ENCODE measurements at regions of chr2 and their contacts with region 1.

Region 1: DNA sequence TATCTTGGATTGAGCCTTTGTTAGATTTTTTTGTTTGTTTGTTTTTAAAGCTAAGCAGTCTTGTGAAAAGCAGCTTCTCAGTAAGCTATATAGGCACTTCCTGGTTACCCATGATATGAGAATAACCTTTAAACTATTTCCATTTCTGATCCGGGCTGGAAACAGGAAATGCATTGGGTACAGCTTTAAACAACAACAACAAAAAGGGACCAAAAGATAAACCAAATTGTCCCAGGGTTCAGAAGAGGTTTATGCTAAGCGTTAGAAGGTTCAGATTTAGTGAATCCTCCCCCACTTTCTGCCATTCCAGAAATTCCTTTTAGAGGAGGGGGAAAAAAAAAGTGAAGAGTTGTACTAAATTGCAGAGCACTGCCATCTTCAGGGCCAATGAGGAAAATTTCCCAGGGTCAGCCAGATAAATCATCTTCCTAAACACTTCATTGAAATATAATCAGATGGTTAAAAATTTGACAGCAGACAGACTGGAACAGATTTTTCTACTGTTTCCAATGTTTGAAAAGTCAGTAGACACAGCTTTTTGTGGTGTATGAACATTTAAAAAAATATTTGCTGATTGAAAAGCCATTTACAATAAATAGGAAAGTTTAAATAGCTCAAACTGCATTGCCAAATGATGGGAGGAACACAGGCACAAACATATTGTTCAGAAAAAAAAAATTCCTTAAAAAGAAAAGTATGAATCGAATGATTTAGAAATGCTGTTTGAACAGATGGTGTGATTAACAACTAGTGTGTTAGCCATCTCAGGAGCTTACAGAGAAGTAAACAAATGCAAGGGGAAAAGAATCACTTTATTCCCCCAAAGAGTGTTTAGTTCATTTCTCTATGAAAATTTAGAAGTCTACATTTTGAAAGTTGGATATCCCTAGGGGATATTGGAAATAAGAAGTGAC is 189.9 kb upstream of the TANK start:
- DNase-seq: no peak
- ATAC-seq: 0 out of 3 replicates have a peak, but pooled peaks have one; percentile 20
- H3K4me3 ChIP-seq: no peak overlapping the region
- H3K27ac ChIP-seq: no peak overlapping the region
- H3K4me1 ChIP-seq: no peaks in the 10 kb centered on the region
- H3K27me3 ChIP-seq: peaks cover 0 to 2% of the 10 kb centered on the region in 2 experiments; a peak in 2 of 4 replicates
- CTCF ChIP-seq: peak; percentile 36 to 50 (median 37); a peak in 4 of 6 replicates
- EP300 ChIP-seq: no peak
- POLR2A ChIP-seq: no peak
- RAD21 ChIP-seq: peak; percentile 58

Region 2: DNA sequence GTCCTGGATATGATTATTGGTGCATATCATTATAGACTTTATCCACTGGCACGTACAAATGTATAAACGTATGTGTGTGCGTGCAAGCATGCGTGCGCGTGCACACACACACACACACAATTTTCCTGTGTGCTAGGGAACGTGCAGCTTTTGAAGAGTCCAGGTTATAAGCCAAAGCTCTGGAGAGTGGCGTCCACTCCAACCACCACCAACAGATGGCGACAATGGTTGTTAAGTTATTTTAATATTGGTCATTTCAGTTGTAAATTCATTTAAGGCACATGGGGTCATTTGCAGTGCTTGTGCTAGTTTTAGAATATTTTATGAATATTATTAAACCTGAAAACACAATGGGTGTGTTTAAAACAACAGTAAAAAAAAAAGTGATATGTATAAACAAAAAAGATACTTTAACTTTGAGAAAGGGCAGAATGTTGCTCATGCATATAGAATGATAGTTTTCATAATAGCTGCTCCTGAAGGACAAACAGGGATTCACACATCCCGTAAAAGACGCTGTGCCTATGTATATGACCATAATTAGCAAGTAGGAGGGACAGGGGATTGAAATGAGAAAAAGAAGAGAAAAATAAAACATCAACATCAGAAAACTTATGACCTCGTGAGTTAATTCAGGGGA is 646.0 kb before region 1 on chr2:
- CTCF ChIA-PET with region 1: interaction called, 17 read pairs
- POLR2A ChIA-PET with region 1: no interaction called
- RAD21 ChIA-PET with region 1: interaction called, 6 read pairs
- SMC1A ChIA-PET with region 1: interaction called, 11 read pairs
- in situ Hi-C with region 1: no loop called
- intact Hi-C with region 1: no loop called
- DNase-seq: no peak
- ATAC-seq: peak; percentile 82
- H3K4me3 ChIP-seq: no peak overlapping the region
- H3K27ac ChIP-seq: no peak overlapping the region
- H3K4me1 ChIP-seq: no peaks in the 10 kb centered on the region
- H3K27me3 ChIP-seq: no peaks in the 10 kb centered on the region; a peak in 1 of 4 replicates
- CTCF ChIP-seq: peak; percentile 60 to 72 (median 63)
- EP300 ChIP-seq: no peak
- POLR2A ChIP-seq: no peak
- RAD21 ChIP-seq: peak; percentile 64

Region 3: DNA sequence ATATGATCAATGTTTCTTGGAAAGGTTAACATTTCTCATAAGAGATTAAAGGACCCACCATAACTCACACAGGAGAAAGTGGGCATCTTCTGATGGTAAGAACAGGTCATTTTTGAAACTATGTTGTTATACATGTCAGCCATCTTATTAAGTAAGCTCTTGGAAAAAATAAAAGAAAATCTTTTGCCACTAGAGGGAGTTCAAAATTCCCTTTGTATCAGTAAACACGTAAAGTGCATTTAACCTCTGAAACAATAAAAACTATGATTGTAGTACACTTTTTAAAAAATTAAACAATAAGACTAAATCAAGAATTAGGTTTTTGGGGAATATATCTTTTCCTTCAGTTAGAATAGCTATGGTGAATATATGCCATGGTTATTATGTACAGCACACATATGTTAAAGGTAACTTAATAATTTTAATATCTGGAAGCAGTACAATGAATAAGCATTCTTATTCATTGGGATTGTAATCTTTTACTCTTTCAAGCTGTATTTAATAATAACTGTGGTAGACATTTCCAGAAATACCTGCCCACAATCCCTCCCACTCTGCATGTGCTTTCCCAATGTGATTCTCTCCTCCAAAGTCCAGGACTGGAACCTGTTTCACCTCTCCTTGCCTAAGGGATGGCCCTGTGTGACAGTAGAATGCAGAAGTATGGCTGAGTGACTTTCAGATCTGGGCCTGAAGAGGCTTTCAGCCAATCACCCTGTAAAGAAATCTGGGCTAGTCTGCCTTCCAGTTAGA is 540.9 kb before region 1 on chr2:
- CTCF ChIA-PET with region 1: interaction called, 12 read pairs
- POLR2A ChIA-PET with region 1: interaction called, 3 read pairs
- RAD21 ChIA-PET with region 1: interaction called, 8 read pairs
- SMC1A ChIA-PET with region 1: interaction called, 6 read pairs
- in situ Hi-C with region 1: no loop called
- intact Hi-C with region 1: no loop called
- DNase-seq: no peak
- ATAC-seq: peak; percentile 71
- H3K4me3 ChIP-seq: no peak overlapping the region
- H3K27ac ChIP-seq: no peak overlapping the region
- H3K4me1 ChIP-seq: no peaks in the 10 kb centered on the region; the same call in 1 of the 2 replicates
- H3K27me3 ChIP-seq: no peaks in the 10 kb centered on the region
- CTCF ChIP-seq: peak; percentile 31 to 47 (median 41); a peak in 5 of 6 replicates
- EP300 ChIP-seq: no peak
- POLR2A ChIP-seq: no peak
- RAD21 ChIP-seq: no peak

Region 4: GRCh38 chr2:160910681-160911080 is 59.6 kb before region 1 on chr2:
- CTCF ChIA-PET with region 1: no interaction called
- POLR2A ChIA-PET with region 1: no interaction called
- RAD21 ChIA-PET with region 1: no interaction called
- SMC1A ChIA-PET with region 1: no interaction called
- in situ Hi-C with region 1: no loop called
- intact Hi-C with region 1: no loop called
- DNase-seq: no peak
- ATAC-seq: no peak
- H3K4me3 ChIP-seq: no peak overlapping the region
- H3K27ac ChIP-seq: no peak overlapping the region
- H3K4me1 ChIP-seq: no peaks in the 10 kb centered on the region
- H3K27me3 ChIP-seq: peaks cover 0 to 4% of the 10 kb centered on the region in 2 experiments; a peak in 2 of 4 replicates
- CTCF ChIP-seq: no peak
- EP300 ChIP-seq: no peak
- POLR2A ChIP-seq: no peak
- RAD21 ChIP-seq: no peak

Region 5: DNA sequence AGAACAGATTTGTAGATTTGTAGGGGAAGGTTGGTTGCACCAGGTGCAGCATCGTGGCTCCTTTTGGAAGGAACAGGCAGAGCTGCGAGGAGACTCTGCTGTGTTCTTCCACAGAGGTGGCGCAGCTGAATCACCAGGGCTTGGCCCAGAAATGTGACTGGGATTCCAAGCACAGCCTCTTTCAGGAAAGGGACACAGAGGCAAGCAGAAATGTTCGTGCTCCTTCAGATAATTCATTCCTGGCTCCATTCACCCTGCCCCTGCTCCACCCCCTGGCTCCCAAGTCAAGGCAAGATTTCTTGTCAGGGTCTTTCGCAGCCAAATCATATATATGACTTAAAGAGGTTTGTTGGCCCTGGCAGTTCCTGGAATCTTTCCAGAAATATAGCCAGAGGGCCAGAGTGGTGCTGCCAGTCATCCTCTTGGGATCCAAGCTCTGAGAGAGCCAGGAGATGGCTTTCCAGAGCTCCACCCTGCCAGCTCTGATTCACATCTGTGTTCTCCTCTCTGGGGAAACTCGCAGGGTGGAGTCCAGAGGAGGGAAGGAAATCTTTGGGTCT is 14.0 kb before region 1 on chr2:
- CTCF ChIA-PET with region 1: interaction called, 8 read pairs
- POLR2A ChIA-PET with region 1: no interaction called
- RAD21 ChIA-PET with region 1: interaction called, 11 read pairs
- SMC1A ChIA-PET with region 1: no interaction called
- in situ Hi-C with region 1: no loop called
- intact Hi-C with region 1: no loop called
- DNase-seq: no peak
- ATAC-seq: no peak
- H3K4me3 ChIP-seq: no peak overlapping the region
- H3K27ac ChIP-seq: no peak overlapping the region
- H3K4me1 ChIP-seq: no peaks in the 10 kb centered on the region
- H3K27me3 ChIP-seq: peaks cover 0 to 2% of the 10 kb centered on the region in 2 experiments; a peak in 1 of 4 replicates
- CTCF ChIP-seq: no peak
- EP300 ChIP-seq: no peak
- POLR2A ChIP-seq: no peak
- RAD21 ChIP-seq: no peak

Measured in GM12878 (cell line).